Mammary epithelial cell (primary cell): ENCODE measurements at regions of chr1 and their contacts with region 1.

Region 1: DNA sequence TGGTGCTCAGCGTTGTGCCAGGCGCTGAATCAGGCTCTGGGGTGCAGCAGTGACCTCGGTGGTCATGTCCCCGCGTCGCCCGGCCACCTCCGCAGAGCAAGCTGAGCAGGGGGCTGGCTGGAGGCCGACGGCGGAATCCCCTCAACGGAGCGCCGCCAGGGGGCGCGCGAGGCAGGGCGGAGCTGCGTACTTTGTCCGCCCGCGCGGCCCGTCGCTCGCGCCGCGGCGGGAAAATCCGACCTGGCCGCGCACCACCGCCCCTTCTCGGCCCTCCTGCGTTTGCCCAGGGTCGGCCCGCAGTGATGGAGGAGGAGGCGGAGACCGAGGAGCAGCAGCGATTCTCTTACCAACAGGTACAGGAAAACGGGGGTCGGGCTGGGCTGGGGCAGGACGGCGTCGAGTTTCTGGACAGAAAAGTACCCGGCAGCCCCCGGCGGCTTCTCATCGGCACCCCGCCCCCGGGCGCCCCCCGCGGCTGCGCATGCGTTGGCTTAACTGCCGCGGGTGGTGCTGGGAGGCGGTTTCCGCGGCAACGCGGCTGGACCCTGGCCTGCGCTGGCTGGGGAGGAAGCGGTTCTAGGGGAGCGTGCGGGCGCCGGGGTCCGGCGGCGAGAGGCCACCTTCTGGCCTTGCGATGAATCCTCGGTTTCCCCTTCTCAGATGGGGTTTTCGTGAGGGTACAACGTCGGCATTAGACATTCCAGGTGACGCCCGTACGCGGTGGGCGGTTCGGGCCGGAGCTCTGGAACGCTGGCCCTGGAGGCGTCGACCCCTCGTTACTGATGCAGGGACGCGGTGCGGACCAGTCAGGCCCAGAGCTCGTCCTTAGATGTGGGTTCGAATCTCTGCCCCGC is at the start of gene CENPS:
- DNase-seq: peak; percentile 87
- H3K4me3 ChIP-seq: peak within 1 kb of the TSS; percentile 71 to 96 (median 87)
- H3K27ac ChIP-seq: peak within 1 kb of the TSS; percentile 91
- H3K4me1 ChIP-seq: peaks cover 9% of the 10 kb centered on the region
- H3K27me3 ChIP-seq: no peaks in the 10 kb centered on the region
- CTCF ChIP-seq: peak; percentile 65 to 89
- total RNA-seq, gene CENPS: 9.7 to 24.1 TPM

Region 2: GRCh38 chr1:9874959-9875635 is 555.3 kb before region 1 on chr1:
- CTCF ChIA-PET with region 1: no interaction called
- dilution Hi-C with region 1: no loop called
- in situ Hi-C with region 1: no loop called
- intact Hi-C with region 1: loop called (anchors 1 kb)
- DNase-seq: peak; percentile 49
- H3K4me3 ChIP-seq: no peak overlapping the region
- H3K27ac ChIP-seq: no peak overlapping the region
- H3K4me1 ChIP-seq: peaks cover 35% of the 10 kb centered on the region
- H3K27me3 ChIP-seq: no peaks in the 10 kb centered on the region
- CTCF ChIP-seq: peak; percentile 79 to 97

Region 3: GRCh38 chr1:10152709-10153284 is 277.6 kb before region 1 on chr1:
- CTCF ChIA-PET with region 1: no interaction called
- dilution Hi-C with region 1: no loop called
- in situ Hi-C with region 1: no loop called
- intact Hi-C with region 1: loop called (anchors 5 kb)
- DNase-seq: peak; percentile 40
- H3K4me3 ChIP-seq: no peak overlapping the region
- H3K27ac ChIP-seq: no peak overlapping the region
- H3K4me1 ChIP-seq: no peaks in the 10 kb centered on the region
- H3K27me3 ChIP-seq: no peaks in the 10 kb centered on the region
- CTCF ChIP-seq: peak; percentile 71 to 81

Region 4: DNA sequence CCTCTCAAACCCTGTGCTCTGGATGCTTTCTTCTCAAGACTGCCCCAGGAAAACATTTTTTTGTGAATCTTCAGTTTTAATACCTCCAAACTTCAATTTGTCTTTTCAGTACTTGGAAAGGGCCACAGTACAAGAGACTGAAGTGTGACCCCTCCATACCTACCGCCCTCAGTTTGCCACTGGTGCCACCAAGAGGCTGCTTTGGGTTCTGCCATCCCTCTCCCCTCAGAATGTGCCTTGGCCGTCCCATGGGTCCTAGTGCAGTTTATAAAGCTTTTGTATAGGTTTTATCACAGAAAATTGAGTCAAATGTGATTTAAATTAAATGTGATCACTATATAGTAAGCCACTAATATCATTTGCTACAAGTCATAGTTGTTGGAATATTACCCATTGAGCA is 92.4 kb before region 1 on chr1:
- CTCF ChIA-PET with region 1: no interaction called
- dilution Hi-C with region 1: loop called (anchors 5 kb)
- in situ Hi-C with region 1: no loop called
- intact Hi-C with region 1: no loop called
- DNase-seq: no peak
- H3K4me3 ChIP-seq: no peak overlapping the region
- H3K27ac ChIP-seq: no peak overlapping the region
- H3K4me1 ChIP-seq: no peaks in the 10 kb centered on the region
- H3K27me3 ChIP-seq: no peaks in the 10 kb centered on the region
- CTCF ChIP-seq: peak; percentile 66 to 68

Region 5: GRCh38 chr1:10494754-10495474 is 64.5 kb after region 1 on chr1:
- CTCF ChIA-PET with region 1: no interaction called
- dilution Hi-C with region 1: loop called (anchors 5 kb)
- in situ Hi-C with region 1: loop called (anchors 5 to 10 kb)
- intact Hi-C with region 1: loop called (anchors 1 kb)
- DNase-seq: peak; percentile 74
- H3K4me3 ChIP-seq: peak overlapping the region in 1 of 3 experiments; percentile 19
- H3K27ac ChIP-seq: peak overlapping the region; percentile 96
- H3K4me1 ChIP-seq: peaks cover 27% of the 10 kb centered on the region
- H3K27me3 ChIP-seq: no peaks in the 10 kb centered on the region
- CTCF ChIP-seq: peak; percentile 78 to 93

Region 6: GRCh38 chr1:10765734-10766478 is 335.5 kb after region 1 on chr1:
- CTCF ChIA-PET with region 1: no interaction called
- dilution Hi-C with region 1: no loop called
- in situ Hi-C with region 1: no loop called
- intact Hi-C with region 1: no loop called
- DNase-seq: peak; percentile 31
- H3K4me3 ChIP-seq: no peak overlapping the region
- H3K27ac ChIP-seq: no peak overlapping the region
- H3K4me1 ChIP-seq: peaks cover 8% of the 10 kb centered on the region
- H3K27me3 ChIP-seq: no peaks in the 10 kb centered on the region
- CTCF ChIP-seq: no peak

Region 7: DNA sequence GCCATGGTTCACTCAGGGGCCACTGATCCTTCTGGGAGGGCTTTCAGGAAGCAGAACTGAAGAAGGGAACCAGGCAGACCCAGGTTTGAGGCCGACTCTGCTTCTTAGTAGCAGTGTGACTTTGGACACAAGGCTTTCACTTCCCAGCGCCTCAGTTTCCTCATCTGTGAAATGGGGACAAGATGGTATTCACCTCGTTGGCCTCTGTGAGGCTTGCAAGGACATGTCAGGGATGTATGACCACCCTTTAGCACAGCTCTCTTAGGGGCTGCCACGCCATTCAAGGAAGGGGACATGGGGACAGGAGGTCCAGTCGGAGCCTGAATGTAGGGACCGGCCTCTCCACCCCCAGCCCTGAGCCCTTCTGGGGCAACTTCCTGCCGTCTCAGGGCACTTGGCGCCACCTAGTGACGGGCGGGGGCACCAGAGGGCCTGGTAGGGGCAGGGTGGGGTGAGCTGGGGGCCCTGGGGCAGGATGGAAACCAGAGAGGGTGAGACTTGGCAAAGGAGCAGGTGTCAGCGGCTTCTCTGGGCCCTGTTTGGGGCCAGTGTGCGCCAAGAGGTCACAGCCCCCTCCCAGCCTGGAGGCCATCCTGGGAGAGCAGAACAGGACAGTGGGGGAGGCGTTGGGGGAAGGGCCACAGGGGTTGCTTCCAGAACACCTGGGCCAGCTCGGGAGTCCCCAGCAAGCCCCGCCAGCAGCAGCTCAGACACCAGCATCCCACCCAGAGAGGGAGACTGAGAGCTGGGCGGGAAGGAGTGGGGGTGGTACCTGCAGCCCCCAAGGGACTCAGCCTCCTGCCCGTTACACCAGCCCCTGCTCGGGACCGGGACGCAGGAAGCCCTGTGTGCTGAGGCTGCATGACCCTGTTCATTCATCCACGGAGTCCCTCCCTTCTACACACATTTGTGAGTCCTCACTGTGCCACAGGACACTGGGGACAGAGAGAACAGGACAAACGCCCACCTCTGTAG is 479.5 kb after region 1 on chr1:
- CTCF ChIA-PET with region 1: no interaction called
- dilution Hi-C with region 1: no loop called
- in situ Hi-C with region 1: no loop called
- intact Hi-C with region 1: loop called (anchors 10 kb)
- DNase-seq: peak; percentile 27
- H3K4me3 ChIP-seq: no peak overlapping the region
- H3K27ac ChIP-seq: no peak overlapping the region
- H3K4me1 ChIP-seq: peaks cover 9% of the 10 kb centered on the region
- H3K27me3 ChIP-seq: no peaks in the 10 kb centered on the region
- CTCF ChIP-seq: peak; percentile 41 to 79